IMR-90 (cell line): ENCODE measurements at regions of chr9 and their contacts with region 1.

Region 1: DNA sequence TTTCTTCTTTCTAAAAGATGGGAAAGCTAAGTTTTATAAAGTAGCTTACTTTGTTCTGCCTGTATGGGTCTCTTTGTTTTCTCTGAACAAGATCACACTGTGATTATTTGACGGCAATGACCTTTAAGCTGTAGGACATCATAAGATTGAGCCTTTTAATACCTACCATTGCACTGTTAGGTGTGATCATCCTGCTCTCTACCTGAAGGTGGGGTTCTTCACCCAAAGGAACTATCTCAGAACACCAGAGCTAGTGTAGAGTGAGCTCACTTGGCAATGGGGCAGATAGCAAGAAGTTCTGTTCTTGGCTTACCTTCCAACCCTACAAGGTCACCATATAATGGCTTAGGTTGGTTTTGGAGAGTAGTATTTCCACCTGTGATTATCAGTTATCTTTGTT is 200.2 kb downstream of the SPATA31D1 start:
- DNase-seq: no peak
- ATAC-seq: no peak
- H3K4me3 ChIP-seq: no peak overlapping the region
- H3K27ac ChIP-seq: no peak overlapping the region
- H3K4me1 ChIP-seq: no peaks in the 10 kb centered on the region
- H3K27me3 ChIP-seq: no peaks in the 10 kb centered on the region
- CTCF ChIP-seq: no peak
- POLR2A ChIP-seq: no peak
- RAD21 ChIP-seq: no peak

Region 2: GRCh38 chr9:82209797-82210470 is 21.1 kb after region 1 on chr9:
- CTCF ChIA-PET with region 1: no interaction called
- POLR2A ChIA-PET with region 1: interaction called, 21 read pairs
- dilution Hi-C with region 1: no loop called
- in situ Hi-C with region 1: no loop called
- intact Hi-C with region 1: no loop called
- DNase-seq: peak; percentile 7
- ATAC-seq: no peak
- H3K4me3 ChIP-seq: no peak overlapping the region
- H3K27ac ChIP-seq: no peak overlapping the region
- H3K4me1 ChIP-seq: no peaks in the 10 kb centered on the region
- H3K27me3 ChIP-seq: no peaks in the 10 kb centered on the region
- CTCF ChIP-seq: no peak
- POLR2A ChIP-seq: no peak
- RAD21 ChIP-seq: no peak